OCI-LY7 (cell line): ENCODE measurements at regions of chr5 and their contacts with region 1.

Region 1: GRCh38 chr5:134289509-134290113 is 63.7 kb upstream of the PPP2CA start:
- DNase-seq: peak; percentile 67
- H3K4me3 ChIP-seq: no peak overlapping the region
- H3K27ac ChIP-seq: no peak overlapping the region
- H3K4me1 ChIP-seq: no peaks in the 10 kb centered on the region
- CTCF ChIP-seq: peak; percentile 86

Region 2: GRCh38 chr5:134041570-134042411 is 247.8 kb before region 1 on chr5:
- CTCF ChIA-PET with region 1: no interaction called
- POLR2A ChIA-PET with region 1: no interaction called
- intact Hi-C with region 1: loop called (anchors 5 kb)
- DNase-seq: no peak
- H3K4me3 ChIP-seq: no peak overlapping the region
- H3K27ac ChIP-seq: no peak overlapping the region
- H3K4me1 ChIP-seq: no peaks in the 10 kb centered on the region
- CTCF ChIP-seq: no peak

Region 3: GRCh38 chr5:134184155-134185135 is 105.2 kb before region 1 on chr5:
- CTCF ChIA-PET with region 1: interaction called, 10 read pairs
- POLR2A ChIA-PET with region 1: no interaction called
- intact Hi-C with region 1: loop called (anchors 1 kb)
- DNase-seq: peak; percentile 76
- H3K4me3 ChIP-seq: no peak overlapping the region
- H3K27ac ChIP-seq: no peak overlapping the region
- H3K4me1 ChIP-seq: no peaks in the 10 kb centered on the region
- CTCF ChIP-seq: peak; percentile 88

Region 4: GRCh38 chr5:134263801-134264200 is 25.8 kb before region 1 on chr5:
- CTCF ChIA-PET with region 1: no interaction called
- POLR2A ChIA-PET with region 1: no interaction called
- intact Hi-C with region 1: no loop called
- DNase-seq: no peak
- H3K4me3 ChIP-seq: no peak overlapping the region
- H3K27ac ChIP-seq: no peak overlapping the region
- H3K4me1 ChIP-seq: no peaks in the 10 kb centered on the region
- CTCF ChIP-seq: no peak

Region 5: DNA sequence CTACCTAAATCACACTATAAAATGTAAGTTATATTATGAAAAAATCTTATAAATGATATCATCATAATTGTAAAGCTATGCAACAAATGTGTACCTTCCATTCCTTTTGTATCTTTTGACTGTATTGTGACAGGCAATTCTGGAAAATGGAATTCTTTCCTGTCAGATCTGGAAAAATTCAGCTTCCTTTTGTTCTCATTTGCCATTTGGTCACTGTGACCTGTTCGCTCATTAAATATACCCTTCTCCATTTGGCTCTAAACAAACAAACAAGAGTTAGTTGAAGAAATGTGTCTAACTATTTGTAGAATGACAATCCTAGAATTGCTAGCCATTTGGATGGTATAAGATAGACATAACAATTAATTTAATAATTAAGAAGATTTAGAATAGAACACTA is 14.7 kb after region 1 on chr5:
- CTCF ChIA-PET with region 1: no interaction called
- POLR2A ChIA-PET with region 1: no interaction called
- intact Hi-C with region 1: no loop called
- DNase-seq: no peak
- H3K4me3 ChIP-seq: no peak overlapping the region
- H3K27ac ChIP-seq: no peak overlapping the region
- H3K4me1 ChIP-seq: no peaks in the 10 kb centered on the region
- CTCF ChIP-seq: no peak

Region 6: DNA sequence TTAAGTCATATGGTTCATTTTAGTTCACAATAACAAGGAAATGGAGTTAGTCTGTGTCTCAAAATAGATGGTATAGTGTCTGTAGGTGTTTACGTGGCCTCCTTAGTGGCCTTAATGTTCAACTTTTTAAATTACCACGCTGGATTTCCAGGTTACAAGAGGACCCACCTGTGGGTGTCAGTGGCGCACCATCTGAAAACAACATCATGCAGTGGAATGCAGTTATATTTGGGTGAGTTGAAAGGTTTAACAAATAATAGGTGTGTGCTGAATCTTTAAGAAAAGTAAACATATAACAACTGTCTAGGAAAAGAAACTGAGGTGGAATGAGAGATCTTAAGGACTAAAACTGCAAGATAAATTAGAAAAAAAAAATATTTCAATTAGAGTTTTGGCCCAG is 84.6 kb after region 1 on chr5:
- CTCF ChIA-PET with region 1: no interaction called
- POLR2A ChIA-PET with region 1: no interaction called
- intact Hi-C with region 1: no loop called
- DNase-seq: peak; percentile 20
- H3K4me3 ChIP-seq: no peak overlapping the region
- H3K27ac ChIP-seq: no peak overlapping the region
- H3K4me1 ChIP-seq: peaks cover 17% of the 10 kb centered on the region
- CTCF ChIP-seq: peak; percentile 37; the same call in 1 of the 2 replicates

Region 7: DNA sequence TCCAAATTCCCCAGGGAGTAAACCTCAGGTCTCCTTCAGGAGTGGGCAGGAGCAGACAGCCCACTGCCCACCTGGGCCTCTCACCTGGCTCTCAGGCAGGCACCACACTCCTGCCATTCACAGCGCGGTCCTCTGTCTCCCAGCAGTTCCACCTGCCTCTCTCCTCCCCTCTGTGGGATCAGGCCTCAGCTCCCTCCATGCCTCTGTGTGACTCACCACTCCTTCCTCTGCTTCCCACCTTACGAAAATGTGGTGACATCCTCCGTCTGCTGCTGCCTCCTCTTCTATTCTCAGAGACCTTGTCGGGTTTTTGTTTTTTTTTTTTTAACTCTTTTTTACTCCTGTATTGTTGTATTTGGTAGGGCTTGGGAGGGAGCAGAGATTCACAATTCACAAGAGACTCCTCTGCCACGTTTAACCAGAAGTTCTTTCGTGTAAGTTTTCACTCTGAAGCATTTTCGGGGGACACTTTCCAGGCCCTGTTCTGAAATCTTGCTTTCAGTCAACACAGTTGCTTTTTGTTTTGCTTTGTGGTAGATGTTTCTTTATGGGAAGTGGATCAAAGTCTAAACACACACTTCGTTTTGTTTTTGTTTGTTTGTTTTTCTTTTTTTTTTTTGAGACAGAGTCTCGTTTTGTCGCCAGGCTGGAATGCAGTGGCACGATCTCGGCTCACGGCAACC is 143.2 kb after region 1 on chr5:
- CTCF ChIA-PET with region 1: no interaction called
- POLR2A ChIA-PET with region 1: no interaction called
- intact Hi-C with region 1: no loop called
- DNase-seq: no peak
- H3K4me3 ChIP-seq: no peak overlapping the region
- H3K27ac ChIP-seq: no peak overlapping the region
- H3K4me1 ChIP-seq: no peaks in the 10 kb centered on the region
- CTCF ChIP-seq: no peak